ENCODE measurements at regions of chr18 and their contacts with region 1.

Region 1: GRCh38 chr18:13026583-13027270 is 35.6 kb downstream of the CEP192 start:
- DNase-seq: no peak
- ATAC-seq: no peak

Region 2: DNA sequence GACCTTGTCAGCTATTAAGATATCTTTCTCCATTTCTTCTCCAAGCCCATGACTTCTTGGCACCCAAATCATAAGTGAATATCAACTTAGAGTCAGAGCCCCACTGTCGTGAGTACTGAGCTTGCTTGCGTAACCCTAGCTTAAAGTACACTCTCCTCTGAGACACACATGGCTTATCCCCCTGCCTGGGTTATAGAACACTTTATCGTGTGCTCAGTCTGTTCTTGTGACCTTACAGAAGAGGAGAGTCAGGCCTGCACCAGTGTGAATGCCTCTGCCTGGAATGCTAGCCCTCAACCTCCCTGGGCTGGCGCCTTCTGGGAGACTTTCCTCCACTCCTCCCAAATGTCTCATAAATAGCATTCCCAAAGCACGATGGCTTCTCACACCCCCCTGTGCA is 43.7 kb after region 1 on chr18:
- intact Hi-C with region 1: loop called (anchors 5 kb)
- DNase-seq: no peak
- ATAC-seq: peak; percentile 92

Region 3: DNA sequence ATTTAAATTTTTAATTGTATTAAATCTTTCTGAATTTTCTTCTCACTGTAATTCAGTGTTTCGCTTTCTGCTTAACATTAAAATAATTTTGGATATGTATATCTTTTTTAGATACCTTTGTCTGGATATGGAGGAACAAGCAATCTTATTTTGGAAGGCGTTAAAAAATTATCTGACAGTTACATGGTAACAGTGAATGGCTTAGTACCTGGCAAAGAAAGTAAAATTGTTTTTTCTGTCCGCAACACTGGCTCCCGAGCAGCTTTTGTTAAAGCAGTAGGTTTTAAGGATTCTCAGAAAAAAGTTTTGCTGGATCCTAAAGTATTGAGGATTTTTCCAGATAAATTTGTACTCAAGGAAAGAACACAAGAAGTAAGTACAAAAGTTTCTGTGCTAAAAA is 60.2 kb after region 1 on chr18:
- intact Hi-C with region 1: loop called (anchors 5 kb)
- DNase-seq: no peak
- ATAC-seq: no peak

Region 4: GRCh38 chr18:13394801-13395200 is 368.1 kb after region 1 on chr18:
- intact Hi-C with region 1: no loop called
- DNase-seq: no peak
- ATAC-seq: no peak